ENCODE measurements at regions of chrX and their contacts with region 1.

Region 1: GRCh38 chrX:39149761-39150160 is 348.5 kb downstream of the MID1IP1 start:
- DNase-seq: peak; percentile 51 to 79
- ATAC-seq: peak; percentile 52 to 83 (median 65)
- H3K4me3 ChIP-seq: no peak overlapping the region
- H3K27ac ChIP-seq: no peak overlapping the region
- H3K4me1 ChIP-seq: peaks cover 0 to 12% (median 0%) of the 10 kb centered on the region in 9 donors
- H3K27me3 ChIP-seq: peaks cover 0 to 32% (median 0%) of the 10 kb centered on the region in 7 donors
- CTCF ChIP-seq: peak; percentile 44 to 83 (median 66)

Region 2: DNA sequence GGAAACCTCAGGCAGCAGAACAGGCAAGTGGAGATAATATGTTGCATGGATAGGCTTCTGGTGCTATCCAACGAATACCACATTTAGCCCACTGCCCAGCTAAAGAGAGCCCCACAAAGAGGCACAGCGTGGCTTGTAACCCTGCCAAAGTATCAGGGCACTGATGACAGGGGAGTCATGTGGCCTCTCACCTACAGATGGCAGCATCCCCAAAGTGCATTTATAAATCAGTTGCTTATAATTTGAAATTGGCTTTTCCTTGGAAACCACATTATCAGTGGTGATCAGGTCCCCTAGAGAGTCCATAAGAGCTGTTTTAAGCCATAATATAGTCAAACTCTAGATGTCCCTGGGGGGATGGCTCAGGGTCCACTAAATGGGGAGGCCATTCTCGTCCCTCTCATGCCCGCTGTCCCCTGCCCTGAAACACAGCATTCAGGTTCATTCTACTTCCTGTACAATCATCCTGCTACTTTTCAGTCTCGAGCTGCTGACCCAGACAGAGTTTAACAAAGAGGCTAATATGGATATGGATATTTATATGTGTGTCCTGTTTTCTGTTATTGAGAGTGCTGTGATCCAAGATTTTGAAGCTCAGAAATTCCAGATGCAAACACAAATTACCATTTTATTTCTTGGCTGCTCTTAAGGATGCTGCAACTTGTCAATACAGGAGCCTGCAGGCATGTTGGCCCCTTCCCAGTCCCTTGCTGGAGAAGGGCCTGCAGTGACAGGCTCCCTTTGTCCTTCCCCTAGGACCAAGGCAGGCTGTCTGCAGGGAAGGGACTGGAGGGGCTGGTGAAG is 957.6 kb before region 1 on chrX:
- intact Hi-C with region 1: no loop called
- DNase-seq: no peak
- ATAC-seq: peak in 2 of 8 donors; percentile 31 to 72
- H3K4me3 ChIP-seq: no peak overlapping the region
- H3K27ac ChIP-seq: no peak overlapping the region
- H3K4me1 ChIP-seq: peaks cover 0 to 5% (median 0%) of the 10 kb centered on the region in 9 donors
- H3K27me3 ChIP-seq: peaks cover 0 to 46% (median 0%) of the 10 kb centered on the region in 7 donors
- CTCF ChIP-seq: peak in 8 of 9 donors; percentile 18 to 51 (median 44)

Region 3: DNA sequence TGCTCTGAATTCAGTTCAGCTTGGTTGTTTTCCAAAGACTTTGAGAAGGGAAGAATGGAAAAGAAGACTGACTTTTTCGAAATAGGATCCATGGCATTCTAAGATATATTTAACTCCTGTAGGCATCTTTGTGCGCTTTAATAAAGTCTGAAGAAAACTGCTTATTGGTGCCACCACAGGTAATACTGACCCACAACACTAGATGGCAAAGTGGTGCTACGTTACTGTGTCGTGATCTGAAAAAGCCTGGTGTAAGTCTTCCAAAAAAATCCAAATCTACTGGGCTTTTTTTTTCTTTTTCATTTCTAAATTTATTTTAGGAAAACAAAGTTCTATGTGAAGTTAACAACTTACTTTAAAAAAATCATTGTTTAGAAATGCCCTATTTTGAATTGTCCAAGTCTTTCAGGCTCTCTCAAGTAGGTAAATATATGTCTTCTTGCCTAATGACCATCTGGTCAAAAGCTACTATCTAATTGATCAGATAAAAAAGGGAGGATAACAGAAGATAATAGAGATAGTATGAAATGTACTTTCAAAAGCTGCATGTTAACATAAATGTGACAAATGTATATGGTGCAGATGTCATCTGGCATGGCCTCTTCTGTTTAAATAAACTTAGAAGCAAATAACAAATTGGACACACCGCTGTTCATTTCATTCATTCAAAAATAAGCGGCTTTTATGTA is 395.5 kb before region 1 on chrX:
- intact Hi-C with region 1: loop called in 4 of 10 experiments (anchors 5 to 10 kb)
- DNase-seq: peak in 1 of 2 donors; percentile 4
- ATAC-seq: peak in 3 of 8 donors; percentile 42 to 75 (median 47)
- H3K4me3 ChIP-seq: no peak overlapping the region
- H3K27ac ChIP-seq: no peak overlapping the region
- H3K4me1 ChIP-seq: peaks cover 0 to 4% (median 0%) of the 10 kb centered on the region in 9 donors
- H3K27me3 ChIP-seq: peaks cover 0 to 24% (median 0%) of the 10 kb centered on the region in 7 donors
- CTCF ChIP-seq: peak; percentile 16 to 67 (median 61)

Region 4: GRCh38 chrX:38768079-38768478 is 381.7 kb before region 1 on chrX:
- intact Hi-C with region 1: loop called in 5 of 10 experiments (anchors 5 to 10 kb)
- DNase-seq: no peak
- ATAC-seq: peak in 1 of 8 donors; percentile 51
- H3K4me3 ChIP-seq: no peak overlapping the region
- H3K27ac ChIP-seq: no peak overlapping the region
- H3K4me1 ChIP-seq: no peaks in the 10 kb centered on the region
- H3K27me3 ChIP-seq: peaks cover 0 to 32% (median 0%) of the 10 kb centered on the region in 7 donors
- CTCF ChIP-seq: peak in 8 of 9 donors; percentile 15 to 59 (median 44)

Region 5: GRCh38 chrX:38803586-38804431 is 346.0 kb before region 1 on chrX:
- intact Hi-C with region 1: loop called in 3 of 10 experiments (anchors 10 kb)
- DNase-seq: peak; percentile 77 to 86
- ATAC-seq: peak; percentile 81 to 94 (median 84)
- H3K4me3 ChIP-seq: peak overlapping the region; percentile 63 to 77 (median 70)
- H3K27ac ChIP-seq: peak overlapping the region; percentile 89 to 96 (median 95)
- H3K4me1 ChIP-seq: peaks cover 0 to 47% (median 26%) of the 10 kb centered on the region in 9 donors
- H3K27me3 ChIP-seq: no peaks in the 10 kb centered on the region
- CTCF ChIP-seq: no peak

Region 6: GRCh38 chrX:38985375-38985774 is 164.4 kb before region 1 on chrX:
- intact Hi-C with region 1: loop called in 1 of 10 experiments (anchors 10 kb)
- DNase-seq: no peak
- ATAC-seq: peak in 1 of 8 donors; percentile 20
- H3K4me3 ChIP-seq: no peak overlapping the region
- H3K27ac ChIP-seq: no peak overlapping the region
- H3K4me1 ChIP-seq: peaks cover 0 to 6% (median 0%) of the 10 kb centered on the region in 9 donors
- H3K27me3 ChIP-seq: peaks cover 0 to 11% (median 0%) of the 10 kb centered on the region in 7 donors
- CTCF ChIP-seq: peak in 8 of 9 donors; percentile 6 to 50 (median 33)

Region 7: DNA sequence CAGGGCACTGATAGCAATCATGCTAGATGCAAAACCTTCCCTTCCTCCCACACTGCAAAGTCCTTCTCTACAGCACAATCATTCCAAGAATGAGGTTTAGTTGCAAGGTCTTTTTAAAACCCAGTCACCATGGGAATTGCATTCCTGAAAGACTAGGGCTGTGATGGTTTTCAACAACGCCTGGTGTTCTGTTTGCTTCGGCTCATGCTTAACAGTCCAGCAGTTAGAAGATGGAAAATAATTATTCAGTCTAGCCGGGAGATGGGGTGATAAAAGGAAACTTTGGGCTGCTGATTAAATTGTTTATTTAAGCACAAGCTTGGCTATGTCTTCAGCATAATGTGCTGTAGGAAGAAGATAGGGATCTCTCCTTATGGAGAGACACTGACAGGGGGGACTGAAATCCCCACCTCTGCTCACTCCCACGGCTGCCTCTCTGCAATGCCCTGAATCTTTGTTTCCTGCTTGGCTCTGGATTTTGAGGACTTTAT is 137.1 kb before region 1 on chrX:
- intact Hi-C with region 1: loop called in 1 of 10 experiments (anchors 10 kb)
- DNase-seq: no peak
- ATAC-seq: peak in 5 of 8 donors; percentile 42 to 74 (median 53)
- H3K4me3 ChIP-seq: no peak overlapping the region
- H3K27ac ChIP-seq: peak overlapping the region in 1 of 10 donors; percentile 31
- H3K4me1 ChIP-seq: peaks cover 0 to 14% (median 0%) of the 10 kb centered on the region in 9 donors
- H3K27me3 ChIP-seq: peaks cover 0 to under 1% (median 0%) of the 10 kb centered on the region in 7 donors
- CTCF ChIP-seq: no peak